Posterior vena cava (tissue), 2 donors: ENCODE measurements at regions of chr20 and their contacts with region 1.

Region 1: DNA sequence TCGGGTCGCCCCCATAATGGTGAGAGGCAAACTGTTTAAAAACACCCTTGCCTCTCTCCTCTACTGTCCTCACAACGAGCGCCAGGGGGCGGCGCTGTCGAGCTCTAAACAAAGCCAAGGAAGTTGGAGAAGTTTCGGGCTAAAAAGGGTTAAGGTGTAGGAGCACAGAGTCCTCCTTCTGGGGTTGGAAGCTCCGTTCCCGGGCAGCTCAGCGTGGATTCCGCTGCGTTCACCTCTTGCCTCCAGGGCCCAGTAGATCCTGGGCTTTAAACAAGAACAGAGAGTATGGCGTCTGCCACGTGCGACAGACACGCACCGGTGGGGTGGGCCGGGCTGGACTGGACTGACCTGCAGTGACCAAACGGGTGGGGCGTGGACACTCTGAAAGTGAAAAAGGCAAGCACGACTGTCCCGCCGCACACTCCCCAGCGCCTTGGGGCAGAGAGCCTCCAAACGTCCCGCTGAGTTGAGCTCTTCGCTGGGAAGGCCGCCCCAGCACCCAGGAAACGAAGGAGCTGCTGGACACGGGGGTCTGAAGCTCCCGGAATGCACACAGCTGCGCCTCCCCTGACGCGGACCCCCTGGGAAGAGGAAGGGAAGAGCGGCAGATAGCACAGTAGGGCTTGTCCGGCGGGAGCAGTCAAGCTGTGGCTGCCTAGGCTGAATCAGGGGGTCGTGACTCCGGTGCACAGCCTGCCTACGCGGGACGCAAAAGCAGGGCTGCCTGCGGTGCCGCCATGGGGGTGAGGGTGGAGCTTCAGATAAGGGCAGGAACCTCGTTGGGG is 1.6 kb upstream of the THBD start:
- DNase-seq: peak; percentile 95

Region 2: DNA sequence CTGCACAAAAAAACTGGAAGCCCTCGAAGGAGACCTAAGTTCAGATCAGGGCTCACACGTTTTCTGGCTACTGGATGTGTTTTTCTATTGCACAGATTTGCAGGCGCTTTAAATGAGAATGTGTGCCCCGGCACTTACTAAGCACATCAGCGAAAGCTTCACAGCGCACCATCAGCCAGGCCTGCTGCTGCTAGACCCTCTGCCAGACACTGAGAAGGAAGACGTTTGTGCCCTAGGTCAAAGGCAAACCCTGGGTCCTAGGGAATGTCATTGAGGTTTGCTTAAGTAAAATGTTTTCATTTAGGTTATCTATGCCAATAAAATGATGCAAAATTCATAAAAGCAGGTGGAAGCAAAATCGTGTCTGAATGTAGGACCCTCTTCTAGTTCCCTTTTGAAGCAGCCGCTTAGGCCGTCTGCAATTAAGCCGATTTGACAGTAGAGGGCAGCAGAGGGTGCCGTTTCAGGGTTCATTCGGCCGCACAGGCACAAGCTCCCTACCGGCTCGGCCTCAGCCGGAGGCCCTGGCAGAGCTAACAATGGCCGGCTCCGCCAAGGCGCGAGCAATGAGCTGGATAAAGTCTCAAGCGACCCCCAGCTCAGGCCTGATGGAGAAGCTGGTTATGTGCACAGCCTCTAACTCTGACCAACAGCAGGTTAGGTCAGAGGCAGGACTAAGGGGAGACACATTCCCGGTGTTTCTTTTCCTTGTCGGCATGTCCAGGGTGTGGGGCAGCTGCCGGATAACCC is 359.5 kb before region 1 on chr20:
- intact Hi-C with region 1: loop called (anchors 5 to 10 kb)
- DNase-seq: peak; percentile 94

Region 3: DNA sequence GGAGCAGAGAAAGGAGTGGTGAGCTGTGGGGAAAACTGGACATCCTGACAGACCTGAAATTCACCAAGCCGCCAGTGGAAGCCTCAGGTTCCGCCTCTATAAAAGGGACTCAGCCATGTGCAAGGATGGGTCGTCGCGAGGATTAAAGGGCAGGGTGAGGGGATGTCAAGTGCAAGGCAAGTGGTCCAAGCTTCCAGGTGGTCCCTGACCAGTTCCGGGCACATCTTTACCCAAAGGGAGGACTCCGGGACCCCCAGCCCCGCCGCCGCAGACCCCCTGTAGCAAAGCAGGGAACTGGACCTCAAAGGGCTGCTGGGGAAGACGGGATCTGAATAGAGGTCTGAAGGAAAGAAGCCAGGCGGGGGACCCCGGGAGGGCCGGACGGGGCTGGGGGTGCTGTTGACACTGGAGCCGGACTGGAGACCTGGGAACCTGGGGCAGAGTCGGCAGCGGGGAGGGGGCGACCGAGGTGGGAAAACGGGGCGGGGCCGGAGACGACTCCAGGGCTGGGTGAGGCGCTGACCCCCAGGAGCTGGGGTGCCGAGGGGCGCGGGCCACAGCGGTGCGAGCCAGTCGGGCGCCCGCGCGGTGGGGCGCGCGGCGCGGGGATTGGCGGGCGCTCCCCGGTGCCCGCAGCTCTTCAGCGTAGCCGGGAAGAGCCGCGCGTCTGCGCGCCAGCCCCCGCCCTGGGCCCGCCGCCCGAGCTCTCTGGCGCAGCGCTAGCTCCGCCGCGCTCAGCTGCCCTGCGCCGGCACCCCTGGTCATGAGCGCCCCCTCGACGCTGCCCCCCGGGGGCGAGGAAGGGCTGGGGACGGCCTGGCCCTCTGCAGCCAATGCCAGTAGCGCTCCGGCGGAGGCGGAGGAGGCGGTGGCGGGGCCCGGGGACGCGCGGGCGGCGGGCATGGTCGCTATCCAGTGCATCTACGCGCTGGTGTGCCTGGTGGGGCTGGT is 16.0 kb before region 1 on chr20 and contains the start of gene SSTR4:
- intact Hi-C with region 1: no loop called
- DNase-seq: no peak
- total RNA-seq, gene SSTR4: not detected

Region 4: GRCh38 chr20:23235173-23236027 is 184.4 kb after region 1 on chr20:
- intact Hi-C with region 1: loop called (anchors 5 to 10 kb)
- DNase-seq: peak; percentile 91

Region 5: DNA sequence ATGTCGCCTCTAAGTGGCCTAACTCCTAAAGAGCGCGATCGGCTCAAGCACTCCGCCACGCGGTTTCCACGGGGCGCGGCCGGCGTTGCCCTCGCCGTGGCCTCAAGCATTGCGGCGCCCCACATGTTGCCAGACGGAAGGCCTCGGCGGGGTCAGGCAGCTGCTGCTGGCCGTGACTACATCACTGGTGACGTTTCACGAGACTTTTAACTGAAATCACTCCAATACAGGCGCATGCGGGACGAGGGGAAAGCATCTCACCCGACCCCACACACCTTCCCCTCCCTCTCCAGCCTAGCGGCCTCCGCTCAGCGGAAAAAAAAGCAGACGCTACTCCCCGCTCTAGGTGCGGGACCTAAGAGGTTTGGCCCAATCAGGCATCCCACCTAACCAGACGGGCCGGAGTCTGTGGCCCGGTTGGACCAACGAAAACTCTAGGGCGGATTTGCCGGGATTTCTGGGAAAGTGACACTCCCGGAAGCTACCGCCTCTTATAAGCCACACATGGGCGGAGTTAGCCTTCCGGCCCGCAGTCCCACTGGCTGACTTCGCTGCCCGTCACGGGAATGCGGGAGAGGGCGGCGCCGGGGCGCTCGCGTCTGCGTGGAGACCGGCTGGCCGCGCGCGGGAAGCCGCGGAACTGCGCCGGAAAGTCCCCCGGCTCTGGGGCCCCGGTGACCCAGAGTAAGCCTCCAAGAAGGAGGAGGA is 299.3 kb after region 1 on chr20 and contains the start of gene NXT1:
- intact Hi-C with region 1: loop called (anchors 10 kb)
- DNase-seq: peak; percentile 99
- total RNA-seq, gene NXT1: 14.6 to 19.1 TPM